Dorsolateral prefrontal cortex (tissue), 120 donors: ENCODE measurements at regions of chr2 and their contacts with region 1.

Region 1: DNA sequence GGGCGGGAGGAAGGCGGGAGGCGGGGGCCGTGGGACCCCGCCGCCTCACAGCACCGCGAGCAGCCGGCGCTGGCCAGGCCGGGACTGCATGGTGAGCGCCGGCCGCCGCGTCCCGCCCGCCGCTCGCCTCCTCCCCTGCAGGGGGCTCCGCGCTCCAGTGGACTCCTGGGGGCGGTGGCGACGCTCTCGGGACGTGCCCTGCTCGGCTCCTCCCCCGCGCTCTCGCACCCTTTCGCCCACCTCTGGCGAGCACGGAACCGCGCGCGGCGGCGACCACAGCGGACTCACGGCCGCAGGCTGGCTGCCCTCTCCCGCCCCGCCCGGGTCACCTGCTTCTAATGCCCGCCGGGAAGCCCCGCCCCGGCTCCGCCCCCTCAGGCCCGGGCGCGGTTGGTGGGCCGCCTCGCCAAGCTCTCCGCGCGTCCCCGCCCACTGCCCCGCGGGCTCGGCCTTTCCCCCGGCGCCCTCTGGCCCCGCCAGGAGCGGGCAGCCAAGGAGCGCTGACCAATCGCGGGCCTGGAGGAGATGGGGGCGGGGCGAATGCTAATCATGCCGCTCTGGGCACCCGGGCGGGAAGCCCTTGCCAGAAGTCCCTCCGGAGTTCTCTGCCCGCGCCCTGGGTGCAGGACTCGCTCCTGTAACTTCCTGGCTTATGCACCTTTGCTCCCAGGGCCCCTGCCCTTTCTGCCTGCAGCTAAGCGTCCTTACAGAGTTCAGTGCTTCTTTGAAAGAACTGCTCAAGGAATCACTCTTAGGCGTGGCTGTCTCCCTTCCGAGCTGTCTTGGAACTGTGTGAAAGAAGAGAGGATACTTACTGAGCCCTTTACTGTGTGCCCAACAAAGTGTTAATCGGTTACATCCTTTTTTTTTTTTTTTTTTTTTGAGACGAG is at the start of gene FZD5:
- DNase-seq: peak; percentile 80 to 99 (median 96)
- H3K4me3 ChIP-seq: peak within 1 kb of the TSS; percentile 57 to 89 (median 78)
- H3K27ac ChIP-seq: peak within 1 kb of the TSS in 57 of 59 donors; percentile 3 to 93 (median 79)
- H3K27me3 ChIP-seq: no peaks in the 10 kb centered on the region
- CTCF ChIP-seq: peak in 51 of 56 donors; percentile 12 to 70 (median 48)
- total RNA-seq, gene FZD5: 2.1 to 17.5 (median 5.0) TPM

Region 2: GRCh38 chr2:207734264-207734635 is 35.6 kb before region 1 on chr2:
- intact Hi-C with region 1: no loop called
- DNase-seq: no peak
- H3K4me3 ChIP-seq: no peak overlapping the region
- H3K27ac ChIP-seq: peak overlapping the region in 3 of 59 donors; percentile 14 to 25 (median 21)
- H3K27me3 ChIP-seq: no peaks in the 10 kb centered on the region
- CTCF ChIP-seq: peak in 53 of 56 donors; percentile 16 to 65 (median 46)

Region 3: DNA sequence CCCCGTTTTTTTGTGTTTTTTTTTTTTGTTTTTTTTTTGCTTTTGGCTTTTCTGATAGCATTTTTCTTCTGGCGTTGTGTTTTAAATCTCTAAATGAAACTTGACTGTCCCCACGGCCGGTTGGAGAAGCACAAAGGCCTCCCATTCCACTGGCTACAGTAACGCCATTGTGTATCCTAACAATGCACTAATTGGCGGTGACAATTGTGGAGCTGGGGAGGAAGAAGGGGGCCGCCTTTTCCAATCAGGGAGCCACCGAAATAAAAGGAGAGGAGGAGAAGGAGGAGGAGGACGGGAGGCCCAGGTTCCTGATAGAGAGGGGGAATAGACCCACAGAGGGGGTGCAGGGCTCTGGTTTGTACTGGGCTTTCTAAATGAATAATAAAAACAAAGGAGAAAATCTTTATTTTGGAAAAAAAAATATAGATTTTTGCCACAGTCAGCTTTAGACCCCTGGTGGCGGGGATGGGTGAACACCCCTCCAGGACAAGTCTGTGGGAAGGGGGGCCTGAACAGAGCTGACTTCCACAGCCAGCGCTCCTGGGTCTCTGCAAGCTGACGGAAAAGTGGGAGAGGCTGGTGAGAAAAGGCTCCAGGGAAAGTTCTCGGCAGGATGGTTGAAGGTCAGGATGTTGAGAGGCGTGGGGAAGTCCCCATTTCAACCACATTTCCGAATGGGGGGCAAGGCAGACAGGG is 43.5 kb after region 1 on chr2:
- intact Hi-C with region 1: loop called (anchors 2 kb)
- DNase-seq: peak in 9 of 10 donors; percentile 37 to 79 (median 63)
- H3K4me3 ChIP-seq: peak overlapping the region in 33 of 59 donors; percentile 1 to 55 (median 29)
- H3K27ac ChIP-seq: peak overlapping the region; percentile 25 to 99 (median 92)
- H3K27me3 ChIP-seq: no peaks in the 10 kb centered on the region
- CTCF ChIP-seq: peak in 25 of 56 donors; percentile 6 to 46 (median 25)

Region 4: GRCh38 chr2:207896525-207897295 is 126.9 kb after region 1 on chr2:
- intact Hi-C with region 1: loop called in 1 of 2 experiments (anchors 10 kb)
- DNase-seq: no peak
- H3K4me3 ChIP-seq: no peak overlapping the region
- H3K27ac ChIP-seq: peak overlapping the region in 38 of 59 donors; percentile 7 to 89 (median 68)
- H3K27me3 ChIP-seq: no peaks in the 10 kb centered on the region
- CTCF ChIP-seq: peak in 6 of 56 donors; percentile 11 to 37 (median 22)

Region 5: DNA sequence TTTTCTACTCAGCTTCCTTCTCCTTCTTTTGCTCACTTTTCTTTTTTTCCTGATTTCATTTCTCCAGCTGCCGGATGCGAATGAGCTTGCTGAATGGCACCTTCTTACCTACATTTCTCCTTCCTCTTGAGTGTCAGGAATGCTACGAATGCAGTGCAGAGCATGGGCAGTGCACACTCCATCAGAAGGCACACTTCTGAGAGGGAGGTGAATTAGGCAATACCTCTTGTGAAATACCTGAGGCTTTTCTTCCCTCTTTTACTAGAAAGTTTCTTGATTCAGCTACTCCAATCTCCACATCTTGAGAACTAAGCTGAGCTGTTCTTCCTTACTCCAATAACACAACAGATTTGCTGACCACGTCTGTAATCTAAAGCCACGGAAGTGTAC is 204.4 kb after region 1 on chr2:
- intact Hi-C with region 1: loop called (anchors 5 kb)
- DNase-seq: no peak
- H3K4me3 ChIP-seq: no peak overlapping the region
- H3K27ac ChIP-seq: no peak overlapping the region
- H3K27me3 ChIP-seq: no peaks in the 10 kb centered on the region
- CTCF ChIP-seq: no peak

Region 6: GRCh38 chr2:208025037-208025813 is 255.4 kb after region 1 on chr2 and contains the start of gene PLEKHM3:
- intact Hi-C with region 1: loop called (anchors 1 to 2 kb)
- DNase-seq: peak; percentile 84 to 93 (median 89)
- H3K4me3 ChIP-seq: peak within 1 kb of the TSS; percentile 61 to 98 (median 88)
- H3K27ac ChIP-seq: peak within 1 kb of the TSS; percentile 43 to 97 (median 88)
- H3K27me3 ChIP-seq: no peaks in the 10 kb centered on the region
- CTCF ChIP-seq: peak in 39 of 56 donors; percentile 3 to 61 (median 33)
- total RNA-seq, gene PLEKHM3: 42.7 to 92.0 (median 63.2) TPM